ENCODE measurements at regions of chr10 and their contacts with region 1.

Region 1: DNA sequence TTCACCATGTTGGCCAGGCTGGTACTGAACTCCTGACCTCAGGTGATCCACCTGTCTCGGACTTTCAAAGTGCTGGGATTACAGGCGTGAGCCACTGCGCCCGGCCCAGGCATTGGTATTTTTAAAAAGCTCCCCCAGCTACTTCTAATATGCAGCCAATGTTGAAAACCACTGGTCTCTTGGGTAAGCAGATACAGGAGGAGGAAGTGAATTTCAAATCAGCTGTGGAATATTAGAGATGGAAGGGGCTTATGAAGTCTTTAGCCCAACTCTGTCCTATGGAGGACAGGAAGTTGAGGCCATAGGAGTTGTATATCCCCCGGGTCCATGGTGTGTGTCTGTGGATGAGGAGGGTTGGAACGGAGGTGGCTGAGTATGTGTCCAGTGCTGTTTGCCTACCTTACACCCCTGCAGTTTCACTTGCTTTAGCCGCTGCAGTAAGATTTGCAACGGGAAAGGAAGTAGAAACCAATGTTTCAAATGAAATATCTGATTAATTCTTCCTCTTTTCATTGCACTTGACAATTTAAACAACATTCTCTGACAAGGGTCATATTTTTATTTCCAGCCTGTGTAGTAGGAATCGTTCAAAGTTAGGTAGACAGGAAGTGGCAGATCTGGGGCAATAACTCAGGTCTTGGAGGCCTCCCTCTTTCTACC is 3.4 kb downstream of the PDE6C start:
- H3K4me3 Mint-ChIP-seq: peak overlapping the region; percentile 58
- H3K27ac Mint-ChIP-seq: peak overlapping the region; percentile 63
- H3K4me1 Mint-ChIP-seq: peaks cover 47% of the 10 kb centered on the region
- H3K27me3 Mint-ChIP-seq: peaks cover 2% of the 10 kb centered on the region

Region 2: DNA sequence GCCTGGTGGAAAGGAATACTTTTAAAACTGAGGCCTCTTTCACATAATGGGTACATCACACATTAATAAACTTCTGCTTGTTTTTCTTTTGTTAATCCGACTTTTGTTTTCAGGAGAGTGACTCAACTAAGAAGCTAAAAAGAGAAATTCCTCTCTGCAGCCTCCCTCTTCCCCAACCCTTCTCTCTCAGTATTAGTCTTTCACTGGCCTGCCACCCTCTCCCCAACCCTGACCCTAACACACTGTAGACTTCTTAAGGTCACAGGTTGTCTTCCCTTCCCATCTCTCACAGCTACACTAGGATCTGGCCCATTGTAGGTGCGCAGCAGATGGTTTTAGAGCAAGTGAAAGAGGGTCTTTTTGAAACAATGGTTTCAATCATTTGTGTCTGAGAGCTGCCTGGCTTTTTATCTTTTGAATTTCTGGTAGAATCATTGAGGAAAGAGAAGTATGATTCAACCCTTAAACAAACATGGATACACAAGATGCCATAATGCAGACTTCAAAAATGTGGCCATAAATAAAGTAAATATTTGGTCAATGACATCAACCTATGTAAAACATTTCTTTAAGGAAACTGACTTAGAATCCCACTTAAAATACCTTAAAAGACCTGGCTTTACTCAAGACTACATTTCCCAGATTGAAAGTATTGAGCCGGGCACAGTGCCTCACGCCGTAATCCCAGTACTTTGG is 67.2 kb before region 1 on chr10:
- intact Hi-C with region 1: no loop called
- H3K4me3 Mint-ChIP-seq: no peak overlapping the region
- H3K27ac Mint-ChIP-seq: no peak overlapping the region
- H3K4me1 Mint-ChIP-seq: no peaks in the 10 kb centered on the region
- H3K27me3 Mint-ChIP-seq: peaks cover 17% of the 10 kb centered on the region

Region 3: DNA sequence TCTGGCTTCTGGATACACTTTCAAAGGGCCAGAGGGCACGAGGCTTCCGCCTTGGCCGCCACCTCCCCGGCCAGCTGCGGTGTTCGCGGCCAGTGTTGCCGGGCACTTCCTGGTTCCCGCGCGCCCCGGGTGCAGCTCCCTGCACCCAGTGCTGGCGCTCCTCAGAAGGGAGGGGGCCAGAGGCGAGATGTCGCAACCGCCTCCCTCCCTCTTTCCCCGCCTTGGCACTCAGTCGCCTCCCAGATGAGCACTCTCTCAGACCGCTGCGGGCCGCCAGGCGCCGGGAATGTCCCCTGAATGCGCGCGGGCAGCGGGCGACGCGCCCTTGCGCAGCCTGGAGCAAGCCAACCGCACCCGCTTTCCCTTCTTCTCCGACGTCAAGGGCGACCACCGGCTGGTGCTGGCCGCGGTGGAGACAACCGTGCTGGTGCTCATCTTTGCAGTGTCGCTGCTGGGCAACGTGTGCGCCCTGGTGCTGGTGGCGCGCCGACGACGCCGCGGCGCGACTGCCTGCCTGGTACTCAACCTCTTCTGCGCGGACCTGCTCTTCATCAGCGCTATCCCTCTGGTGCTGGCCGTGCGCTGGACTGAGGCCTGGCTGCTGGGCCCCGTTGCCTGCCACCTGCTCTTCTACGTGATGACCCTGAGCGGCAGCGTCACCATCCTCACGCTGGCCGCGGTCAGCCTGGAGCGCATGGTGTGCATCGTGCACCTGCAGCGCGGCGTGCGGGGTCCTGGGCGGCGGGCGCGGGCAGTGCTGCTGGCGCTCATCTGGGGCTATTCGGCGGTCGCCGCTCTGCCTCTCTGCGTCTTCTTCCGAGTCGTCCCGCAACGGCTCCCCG is 49.0 kb before region 1 on chr10 and contains the start of gene FFAR4:
- intact Hi-C with region 1: loop called (anchors 10 kb)
- H3K4me3 Mint-ChIP-seq: peak within 1 kb of the TSS; percentile 89
- H3K27ac Mint-ChIP-seq: peak within 1 kb of the TSS; percentile 63
- H3K4me1 Mint-ChIP-seq: peaks cover 58% of the 10 kb centered on the region
- H3K27me3 Mint-ChIP-seq: peaks cover 40% of the 10 kb centered on the region